CD4-positive, alpha-beta T cell (primary cell): ENCODE measurements at regions of chr11 and their contacts with region 1.

Region 1: GRCh38 chr11:36492724-36493304 is 17.3 kb downstream of the TRAF6 start:
- DNase-seq: peak in 6 of 14 experiments; percentile 11 to 77 (median 52)
- ATAC-seq: peak; percentile 67
- H3K4me3 ChIP-seq: no peak overlapping the region
- H3K4me3 Mint-ChIP-seq: no peak overlapping the region
- H3K27ac ChIP-seq: no peak overlapping the region
- H3K27ac Mint-ChIP-seq: peak overlapping the region; percentile 18
- H3K4me1 ChIP-seq: peaks cover 2% of the 10 kb centered on the region
- H3K4me1 Mint-ChIP-seq: peaks cover 33% of the 10 kb centered on the region
- H3K27me3 ChIP-seq: no peaks in the 10 kb centered on the region
- H3K27me3 Mint-ChIP-seq: no peaks in the 10 kb centered on the region
- CTCF ChIP-seq: peak; percentile 89

Region 2: DNA sequence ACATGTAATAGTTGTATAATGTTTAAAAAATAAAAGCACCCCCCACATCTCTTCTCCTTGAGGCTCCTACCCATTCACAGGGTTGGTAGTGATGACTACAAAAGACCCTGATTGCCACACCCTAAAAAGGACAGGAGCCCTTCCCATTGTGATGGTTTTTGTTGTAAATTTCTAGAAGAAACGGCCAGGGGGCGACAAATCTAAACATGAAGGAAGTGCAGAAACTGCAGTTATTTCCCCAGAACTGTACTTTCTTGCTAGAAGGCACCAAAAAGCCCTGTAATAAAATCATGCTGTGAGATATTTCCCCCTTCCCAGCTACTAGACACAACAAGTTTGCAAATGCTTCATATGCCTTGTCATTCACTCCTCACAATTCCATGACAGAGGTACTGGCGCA is 185.9 kb before region 1 on chr11:
- CTCF ChIA-PET with region 1: no interaction called
- POLR2A ChIA-PET with region 1: no interaction called
- intact Hi-C with region 1: loop called in 1 of 2 experiments (anchors 5 kb)
- DNase-seq: peak in 4 of 14 experiments; percentile 15 to 58 (median 46)
- ATAC-seq: no peak
- H3K4me3 ChIP-seq: no peak overlapping the region
- H3K4me3 Mint-ChIP-seq: no peak overlapping the region
- H3K27ac ChIP-seq: no peak overlapping the region
- H3K27ac Mint-ChIP-seq: no peak overlapping the region
- H3K4me1 ChIP-seq: no peaks in the 10 kb centered on the region
- H3K4me1 Mint-ChIP-seq: peaks cover 7% of the 10 kb centered on the region
- H3K27me3 ChIP-seq: peaks cover 0 to 4% of the 10 kb centered on the region in 2 experiments
- H3K27me3 Mint-ChIP-seq: peaks cover 22% of the 10 kb centered on the region
- CTCF ChIP-seq: peak; percentile 33

Region 3: DNA sequence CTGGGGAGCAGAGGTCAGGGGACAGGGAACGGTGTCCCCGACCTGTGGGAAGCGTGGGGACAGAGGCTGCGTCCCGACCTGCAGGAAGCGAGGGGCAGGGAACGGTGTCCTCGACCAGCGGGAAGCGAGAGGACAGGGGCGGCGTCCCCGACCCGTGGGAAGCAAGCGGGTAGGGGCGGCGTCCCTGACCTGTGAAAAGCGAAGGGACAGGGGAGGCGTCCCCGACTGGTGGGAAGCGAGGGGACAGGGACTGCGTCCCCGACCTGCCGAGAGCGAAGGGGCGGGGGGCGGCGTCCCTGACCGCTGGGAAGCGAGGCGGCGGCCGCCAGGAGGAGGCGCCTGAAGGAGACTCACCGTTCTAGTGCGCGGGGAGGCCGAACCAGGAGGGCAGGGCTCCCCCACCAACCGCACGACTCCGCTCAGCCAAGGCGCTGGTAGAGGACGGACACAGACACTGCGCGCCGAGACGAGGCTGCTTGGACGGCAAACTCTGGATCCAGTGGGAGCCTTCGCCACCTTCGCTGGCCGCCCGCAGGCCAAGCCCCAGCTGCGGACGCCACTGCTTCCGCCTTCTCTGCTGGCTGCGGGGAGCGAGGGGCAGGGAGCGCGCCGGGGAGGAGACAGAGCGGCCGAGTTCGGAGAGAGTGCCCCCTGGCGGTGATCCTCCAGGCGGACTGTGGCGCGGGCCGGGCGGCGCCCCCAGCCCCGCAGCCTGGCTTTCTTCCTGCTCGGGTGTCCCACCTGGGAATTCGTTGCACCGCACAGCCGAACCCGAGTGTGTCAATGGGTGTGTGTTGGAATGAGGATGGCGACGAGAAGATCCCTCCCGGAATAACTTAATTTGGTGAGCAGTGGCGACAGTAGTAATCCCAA is 17.1 kb after region 1 on chr11 and contains the start of gene TRAF6:
- CTCF ChIA-PET with region 1: interaction called, 29 read pairs
- POLR2A ChIA-PET with region 1: interaction called, 12 read pairs
- intact Hi-C with region 1: no loop called
- DNase-seq: peak; percentile 78 to 94 (median 87)
- ATAC-seq: peak; percentile 93
- H3K4me3 ChIP-seq: peak within 1 kb of the TSS; percentile 92
- H3K4me3 Mint-ChIP-seq: peak within 1 kb of the TSS; percentile 99
- H3K27ac ChIP-seq: peak within 1 kb of the TSS; percentile 75 to 79
- H3K27ac Mint-ChIP-seq: peak within 1 kb of the TSS; percentile 84
- H3K4me1 ChIP-seq: peaks cover 21% of the 10 kb centered on the region
- H3K4me1 Mint-ChIP-seq: peaks cover 43% of the 10 kb centered on the region
- H3K27me3 ChIP-seq: peaks cover 0 to 3% of the 10 kb centered on the region in 2 experiments
- H3K27me3 Mint-ChIP-seq: peaks cover 10% of the 10 kb centered on the region
- CTCF ChIP-seq: peak; percentile 94
- total RNA-seq, gene TRAF6: 27.9 to 29.0 TPM